ENCODE measurements at regions of chr1 and their contacts with region 1.

Region 1: GRCh38 chr1:112358798-112359408 is 37.1 kb upstream of the CTTNBP2NL start:
- DNase-seq: peak; percentile 54 to 63
- H3K4me3 ChIP-seq: no peak overlapping the region
- H3K4me3 Mint-ChIP-seq: no peak overlapping the region
- H3K27ac Mint-ChIP-seq: no peak overlapping the region
- H3K4me1 ChIP-seq: 0 out of 2 replicates have a peak, but pooled peaks cover 3% of the 10 kb centered on the region
- H3K4me1 Mint-ChIP-seq: no peaks in the 10 kb centered on the region
- H3K27me3 ChIP-seq: no peaks in the 10 kb centered on the region
- H3K27me3 Mint-ChIP-seq: peaks cover 15% of the 10 kb centered on the region
- CTCF ChIP-seq: peak; percentile 51 to 62

Region 2: GRCh38 chr1:112369392-112370285 is 10.7 kb after region 1 on chr1:
- CTCF ChIA-PET with region 1: interaction called, 4 read pairs
- POLR2A ChIA-PET with region 1: no interaction called
- intact Hi-C with region 1: loop called (anchors 1 kb)
- DNase-seq: peak; percentile 78 to 87
- H3K4me3 ChIP-seq: no peak overlapping the region
- H3K4me3 Mint-ChIP-seq: no peak overlapping the region
- H3K27ac Mint-ChIP-seq: no peak overlapping the region
- H3K4me1 ChIP-seq: no peaks in the 10 kb centered on the region
- H3K4me1 Mint-ChIP-seq: no peaks in the 10 kb centered on the region
- H3K27me3 ChIP-seq: no peaks in the 10 kb centered on the region; the same call in 1 of the 2 replicates
- H3K27me3 Mint-ChIP-seq: peaks cover 19% of the 10 kb centered on the region
- CTCF ChIP-seq: peak; percentile 83 to 91

Region 3: DNA sequence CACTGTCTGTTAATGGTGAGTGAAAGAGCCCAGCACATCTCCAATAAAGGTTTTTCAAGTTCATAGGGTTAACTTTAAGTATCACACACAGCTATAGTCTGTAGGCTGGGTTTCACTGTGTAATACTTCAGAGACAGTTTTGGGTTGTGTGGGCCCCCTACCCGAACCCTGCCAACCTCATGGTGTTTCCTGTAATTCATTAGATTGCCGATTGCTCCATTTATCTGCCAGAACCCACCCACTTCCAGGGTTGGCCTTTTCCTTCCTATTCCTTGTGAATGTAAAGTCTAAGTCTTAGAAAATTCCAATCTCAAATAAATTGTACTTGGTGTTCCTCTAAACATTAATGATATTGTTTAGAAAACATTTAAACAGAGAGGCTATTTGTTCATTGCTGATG is 80.7 kb after region 1 on chr1:
- CTCF ChIA-PET with region 1: no interaction called
- POLR2A ChIA-PET with region 1: no interaction called
- intact Hi-C with region 1: no loop called
- DNase-seq: no peak
- H3K4me3 ChIP-seq: no peak overlapping the region
- H3K4me3 Mint-ChIP-seq: no peak overlapping the region
- H3K27ac Mint-ChIP-seq: no peak overlapping the region
- H3K4me1 ChIP-seq: no peaks in the 10 kb centered on the region
- H3K4me1 Mint-ChIP-seq: no peaks in the 10 kb centered on the region
- H3K27me3 ChIP-seq: no peaks in the 10 kb centered on the region
- H3K27me3 Mint-ChIP-seq: no peaks in the 10 kb centered on the region
- CTCF ChIP-seq: no peak

Measured in Caco-2 (cell line).